Activated CD8-positive, alpha-beta T cell treated with anti-CD3 and anti-CD28 coated beads, Interleukin-2, amount 10 ng/mL, durations not matched to agents 7 days and 5 days (primary cell): ENCODE measurements at regions of chr2 and their contacts with region 1.

Region 1: GRCh38 chr2:97740590-97741182 is 27.3 kb downstream of the ZAP70 start:
- DNase-seq: peak; percentile 50
- ATAC-seq: no peak
- H3K4me3 Mint-ChIP-seq: no peak overlapping the region
- H3K27ac Mint-ChIP-seq: peak overlapping the region; percentile 78
- H3K4me1 Mint-ChIP-seq: peaks cover 63% of the 10 kb centered on the region
- H3K27me3 Mint-ChIP-seq: no peaks in the 10 kb centered on the region

Region 2: DNA sequence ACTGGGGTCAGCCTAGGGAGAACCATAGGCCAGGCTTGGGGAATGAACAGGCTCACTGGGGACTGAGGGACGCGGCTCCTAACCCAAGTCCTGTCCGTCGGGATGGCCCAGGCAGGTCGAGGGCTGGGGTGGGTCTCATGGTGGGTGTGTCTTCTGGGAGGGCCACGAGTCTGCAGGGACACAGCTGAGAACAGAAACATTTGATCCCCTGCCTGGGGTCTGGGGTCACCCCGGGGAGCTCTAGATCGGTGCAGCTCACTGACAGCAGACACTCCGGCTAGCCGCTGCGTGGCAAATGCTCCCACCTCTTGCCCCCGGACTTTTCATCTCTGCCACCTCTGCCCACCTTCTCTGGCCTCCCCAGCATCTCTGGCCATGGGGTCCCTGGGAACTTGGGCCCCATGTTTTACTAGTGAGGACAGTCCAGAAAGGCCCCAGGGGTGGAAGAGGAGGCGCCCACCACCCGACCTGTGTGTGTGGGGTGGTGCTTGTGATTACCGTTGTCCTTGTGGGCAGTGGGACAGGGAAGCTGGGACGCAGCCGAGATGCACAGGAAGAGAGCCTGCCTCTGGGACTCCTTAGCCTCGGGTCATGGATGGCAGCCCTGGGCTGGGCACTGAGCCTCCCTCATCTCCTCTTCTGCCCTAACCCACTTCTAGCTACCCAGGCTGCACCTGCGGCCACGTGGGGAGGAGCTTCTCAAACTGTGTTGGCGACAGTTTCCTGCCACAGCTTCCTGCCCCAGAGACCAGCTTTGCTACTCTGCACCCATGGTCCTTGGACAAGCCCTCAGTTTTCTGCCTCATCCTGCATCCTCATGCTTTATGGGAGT is 22.4 kb before region 1 on chr2:
- CTCF ChIA-PET with region 1: interaction called, 265 read pairs
- POLR2A ChIA-PET with region 1: interaction called, 19 read pairs
- DNase-seq: peak; percentile 90
- ATAC-seq: peak; percentile 77
- H3K4me3 Mint-ChIP-seq: peak overlapping the region; percentile 93
- H3K27ac Mint-ChIP-seq: peak overlapping the region; percentile 98
- H3K4me1 Mint-ChIP-seq: peaks cover 78% of the 10 kb centered on the region
- H3K27me3 Mint-ChIP-seq: no peaks in the 10 kb centered on the region

Region 3: GRCh38 chr2:97728091-97728731 is 12.5 kb before region 1 on chr2:
- CTCF ChIA-PET with region 1: interaction called, 35 read pairs
- POLR2A ChIA-PET with region 1: interaction called, 8 read pairs
- DNase-seq: no peak
- ATAC-seq: peak; percentile 55
- H3K4me3 Mint-ChIP-seq: no peak overlapping the region
- H3K27ac Mint-ChIP-seq: peak overlapping the region; percentile 63
- H3K4me1 Mint-ChIP-seq: peaks cover 60% of the 10 kb centered on the region
- H3K27me3 Mint-ChIP-seq: no peaks in the 10 kb centered on the region

Region 4: DNA sequence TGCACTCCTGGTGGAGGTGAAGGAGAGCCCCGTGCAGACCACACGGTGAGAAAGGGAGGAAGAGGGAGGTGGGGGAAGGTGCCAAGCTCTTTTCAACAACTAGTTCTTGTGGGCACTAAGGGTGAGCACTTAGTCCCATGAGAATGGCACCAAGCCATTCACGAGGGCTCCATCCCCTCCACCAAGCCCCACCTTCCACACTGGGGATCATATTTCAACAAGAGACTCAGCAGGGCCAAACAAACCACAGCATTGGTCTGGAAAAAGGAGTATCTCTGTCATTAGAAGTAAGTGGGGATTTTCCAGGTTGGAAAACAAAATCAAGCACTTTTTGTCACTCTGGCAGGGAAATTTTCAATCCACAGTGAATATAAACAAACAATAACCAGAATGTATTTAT is 11.1 kb after region 1 on chr2:
- CTCF ChIA-PET with region 1: interaction called, 34 read pairs
- POLR2A ChIA-PET with region 1: interaction called, 4 read pairs
- DNase-seq: no peak
- ATAC-seq: no peak
- H3K4me3 Mint-ChIP-seq: no peak overlapping the region
- H3K27ac Mint-ChIP-seq: no peak overlapping the region
- H3K4me1 Mint-ChIP-seq: peaks cover 18% of the 10 kb centered on the region
- H3K27me3 Mint-ChIP-seq: no peaks in the 10 kb centered on the region

Region 5: DNA sequence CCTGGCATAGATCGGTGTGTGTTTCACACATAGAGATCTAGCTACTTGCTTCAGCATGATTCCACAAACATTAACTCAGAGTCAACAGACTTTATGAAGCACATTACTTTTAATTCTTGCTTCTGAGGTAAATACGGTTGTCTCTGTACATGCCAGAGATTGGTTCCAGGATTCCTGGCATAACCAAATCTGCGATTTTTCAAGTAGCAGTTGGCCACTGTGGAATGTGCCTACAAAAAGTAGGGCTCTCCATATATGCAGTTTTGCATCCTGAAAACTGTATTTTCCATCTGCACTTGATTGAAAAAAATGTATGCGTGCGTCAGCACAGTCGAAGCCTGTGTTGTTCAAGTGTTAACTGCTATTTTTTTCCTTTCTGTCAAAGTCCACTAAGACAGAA is 57.7 kb after region 1 on chr2:
- CTCF ChIA-PET with region 1: no interaction called
- POLR2A ChIA-PET with region 1: no interaction called
- DNase-seq: no peak
- ATAC-seq: no peak
- H3K4me3 Mint-ChIP-seq: no peak overlapping the region
- H3K27ac Mint-ChIP-seq: no peak overlapping the region
- H3K4me1 Mint-ChIP-seq: no peaks in the 10 kb centered on the region
- H3K27me3 Mint-ChIP-seq: no peaks in the 10 kb centered on the region

Region 6: DNA sequence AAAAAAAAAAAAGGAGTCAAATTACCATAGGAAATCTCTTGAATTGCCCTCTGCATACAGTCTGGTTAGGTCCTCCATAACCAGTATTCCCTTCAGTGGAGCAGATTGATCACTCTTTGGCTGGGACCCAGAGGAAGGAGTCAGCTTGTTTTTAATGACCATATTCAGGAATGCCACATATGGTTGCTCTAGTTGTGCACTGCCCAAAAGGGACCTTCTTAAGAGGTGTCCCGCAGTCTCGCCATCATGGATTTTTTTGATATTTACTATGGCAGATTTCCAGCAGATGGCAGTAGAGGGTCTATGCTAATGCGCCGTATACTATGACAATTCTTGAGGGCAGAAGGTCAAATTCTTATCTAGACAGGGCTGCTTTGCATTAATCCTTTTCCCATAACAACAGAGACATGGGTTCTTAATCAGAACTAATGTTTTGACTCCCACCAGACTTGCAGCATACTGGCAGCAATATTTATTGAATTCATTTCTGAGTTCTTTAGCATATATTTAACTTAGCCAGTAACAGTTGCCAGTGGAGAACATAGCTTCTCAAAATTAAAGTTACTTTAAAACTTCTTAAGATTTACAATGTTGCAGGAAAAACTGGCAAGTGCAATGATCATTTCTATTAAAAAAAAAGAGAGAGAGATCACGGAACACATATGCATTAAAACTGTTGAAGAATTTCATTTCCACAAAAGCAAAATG is 672.2 kb after region 1 on chr2:
- CTCF ChIA-PET with region 1: no interaction called
- POLR2A ChIA-PET with region 1: no interaction called
- DNase-seq: peak; percentile 78
- ATAC-seq: peak; percentile 94
- H3K4me3 Mint-ChIP-seq: no peak overlapping the region
- H3K27ac Mint-ChIP-seq: no peak overlapping the region
- H3K4me1 Mint-ChIP-seq: peaks cover 9% of the 10 kb centered on the region
- H3K27me3 Mint-ChIP-seq: peaks cover 4% of the 10 kb centered on the region